H1 (cell line): ENCODE measurements at regions of chr17 and their contacts with region 1.

Region 1: GRCh38 chr17:77772461-77772897 is 186.0 kb upstream of the TNRC6C start:
- DNase-seq: peak; percentile 38 to 87
- H3K4me3 ChIP-seq: peak overlapping the region in 1 of 4 experiments; percentile 14; a peak in 1 of 8 replicates
- H3K27ac ChIP-seq: no peak overlapping the region
- H3K4me1 ChIP-seq: peaks cover 0 to 6% (median 5%) of the 10 kb centered on the region in 4 experiments; a peak in 4 of 7 replicates
- H3K27me3 ChIP-seq: peaks cover 0 to 3% (median 0%) of the 10 kb centered on the region in 4 experiments; a peak in 3 of 7 replicates
- CTCF ChIP-seq: peak; percentile 87 to 97 (median 95)
- EP300 ChIP-seq: no peak
- POLR2A ChIP-seq: no peak
- RAD21 ChIP-seq: peak; percentile 91 to 97

Region 2: DNA sequence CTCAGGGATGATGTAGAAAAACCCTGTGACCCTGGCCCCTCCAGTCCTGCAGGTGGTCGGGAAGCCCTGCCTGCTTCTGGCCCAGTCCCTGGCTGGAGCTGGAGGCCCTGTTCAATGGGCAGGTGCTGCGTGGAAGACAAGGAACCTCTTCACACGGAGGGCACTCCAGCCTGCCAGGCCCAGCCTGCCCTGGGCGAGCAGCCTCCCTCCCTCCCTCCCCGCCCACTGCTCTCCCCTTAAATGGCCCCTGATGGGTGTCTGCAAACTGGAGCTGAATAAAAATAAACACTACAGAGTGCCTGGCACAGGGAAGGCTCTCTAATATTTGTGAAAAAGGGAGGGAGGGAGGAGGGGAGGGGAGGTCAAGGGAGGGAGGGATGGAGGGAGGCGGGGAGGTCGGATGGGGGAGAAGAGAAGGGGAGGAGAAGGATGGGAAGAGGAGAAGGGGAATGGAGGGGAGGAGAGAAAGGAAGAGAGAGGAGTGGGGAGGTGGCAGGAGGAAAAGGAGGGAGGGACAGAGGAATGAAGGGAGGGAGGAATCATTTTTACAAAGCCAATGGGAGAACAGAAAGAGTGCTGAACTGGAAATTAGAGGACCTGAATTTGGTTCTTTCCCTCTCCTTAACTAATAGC is 36.8 kb before region 1 on chr17:
- CTCF ChIA-PET with region 1: interaction called, 10 read pairs
- POLR2A ChIA-PET with region 1: no interaction called
- DNase-seq: no peak
- H3K4me3 ChIP-seq: peak overlapping the region in 1 of 4 experiments; percentile 8; a peak in 1 of 8 replicates
- H3K27ac ChIP-seq: no peak overlapping the region
- H3K4me1 ChIP-seq: peaks cover 0 to 14% (median 12%) of the 10 kb centered on the region in 4 experiments; a peak in 6 of 7 replicates
- H3K27me3 ChIP-seq: peaks cover 0 to 41% (median 33%) of the 10 kb centered on the region in 4 experiments; a peak in 4 of 7 replicates
- CTCF ChIP-seq: no peak
- EP300 ChIP-seq: no peak
- POLR2A ChIP-seq: no peak
- RAD21 ChIP-seq: no peak

Region 3: GRCh38 chr17:77755410-77755963 is 17.0 kb before region 1 on chr17:
- CTCF ChIA-PET with region 1: interaction called, 42 read pairs
- POLR2A ChIA-PET with region 1: no interaction called
- DNase-seq: no peak
- H3K4me3 ChIP-seq: no peak overlapping the region
- H3K27ac ChIP-seq: no peak overlapping the region
- H3K4me1 ChIP-seq: peaks cover 0 to 3% (median 0%) of the 10 kb centered on the region in 4 experiments; a peak in 2 of 7 replicates
- H3K27me3 ChIP-seq: no peaks in the 10 kb centered on the region; a peak in 1 of 7 replicates
- CTCF ChIP-seq: no peak
- EP300 ChIP-seq: no peak
- POLR2A ChIP-seq: no peak
- RAD21 ChIP-seq: no peak

Region 4: DNA sequence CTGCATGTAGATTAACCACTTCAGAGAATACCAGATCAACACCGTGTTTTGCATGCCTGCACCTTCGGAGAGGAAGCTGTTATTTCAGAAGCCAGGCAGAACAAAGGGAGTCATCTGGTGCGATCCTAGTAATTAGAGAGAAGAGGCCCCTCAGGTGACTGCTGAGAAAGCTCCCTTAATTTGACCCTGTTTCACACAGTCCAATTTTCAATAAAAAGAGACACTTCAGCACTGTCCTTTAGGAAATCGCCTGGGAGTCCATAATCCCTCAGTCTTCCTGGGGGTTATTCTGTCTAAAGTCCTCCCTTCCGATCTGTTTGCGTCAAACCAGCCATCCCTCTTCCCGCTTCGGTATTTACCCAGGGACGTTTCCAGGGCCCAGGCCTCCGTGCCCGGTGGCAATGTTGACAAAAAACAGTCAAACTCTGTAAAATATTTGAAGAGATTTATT is 162.7 kb after region 1 on chr17:
- CTCF ChIA-PET with region 1: no interaction called
- POLR2A ChIA-PET with region 1: no interaction called
- DNase-seq: no peak
- H3K4me3 ChIP-seq: peak overlapping the region in 1 of 4 experiments; percentile 7; a peak in 1 of 8 replicates
- H3K27ac ChIP-seq: no peak overlapping the region
- H3K4me1 ChIP-seq: peaks cover 4 to 20% (median 11%) of the 10 kb centered on the region in 4 experiments; a peak in 6 of 7 replicates
- H3K27me3 ChIP-seq: no peaks in the 10 kb centered on the region; a peak in 1 of 7 replicates
- CTCF ChIP-seq: no peak
- EP300 ChIP-seq: no peak
- POLR2A ChIP-seq: no peak
- RAD21 ChIP-seq: no peak